ENCODE measurements at regions of chr4 and their contacts with region 1.

Region 1: DNA sequence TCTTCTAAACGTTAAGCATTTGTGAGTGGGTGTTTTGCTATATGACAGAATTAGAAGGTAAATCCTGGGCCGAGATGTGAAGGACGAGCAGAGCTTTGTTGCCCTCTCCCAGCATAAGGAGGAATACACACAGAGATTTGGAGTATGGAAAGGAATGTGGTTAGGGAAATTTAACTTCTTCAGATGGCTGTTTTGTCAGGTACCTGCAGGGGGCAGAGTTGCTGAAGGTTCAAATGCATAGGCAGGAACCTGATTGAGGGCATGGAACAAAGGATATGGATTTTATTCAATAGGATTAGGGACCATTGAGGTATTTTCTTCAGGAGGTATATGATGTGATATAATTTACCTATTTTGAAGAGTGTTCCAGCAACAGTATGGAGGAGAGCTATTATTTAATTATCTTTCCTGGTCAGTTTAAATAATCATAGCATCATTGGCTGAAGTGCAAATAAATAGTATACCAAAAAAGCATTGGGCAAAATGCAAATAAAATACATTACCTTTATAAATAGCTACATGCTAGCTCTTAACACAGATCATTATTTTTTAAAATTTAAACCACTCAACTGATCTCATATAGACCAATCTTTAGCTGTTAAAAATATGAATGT is 143.6 kb downstream of the SLIT2 start:
- DNase-seq: peak; percentile 43 to 82
- H3K4me3 ChIP-seq: no peak overlapping the region
- H3K27ac ChIP-seq: no peak overlapping the region
- H3K4me1 ChIP-seq: no peaks in the 10 kb centered on the region; a peak in 1 of 7 replicates
- H3K27me3 ChIP-seq: no peaks in the 10 kb centered on the region
- CTCF ChIP-seq: peak in 2 of 3 experiments; percentile 65 to 83; a peak in 3 of 4 replicates
- EP300 ChIP-seq: no peak
- POLR2A ChIP-seq: no peak
- RAD21 ChIP-seq: peak; percentile 52 to 55

Region 2: DNA sequence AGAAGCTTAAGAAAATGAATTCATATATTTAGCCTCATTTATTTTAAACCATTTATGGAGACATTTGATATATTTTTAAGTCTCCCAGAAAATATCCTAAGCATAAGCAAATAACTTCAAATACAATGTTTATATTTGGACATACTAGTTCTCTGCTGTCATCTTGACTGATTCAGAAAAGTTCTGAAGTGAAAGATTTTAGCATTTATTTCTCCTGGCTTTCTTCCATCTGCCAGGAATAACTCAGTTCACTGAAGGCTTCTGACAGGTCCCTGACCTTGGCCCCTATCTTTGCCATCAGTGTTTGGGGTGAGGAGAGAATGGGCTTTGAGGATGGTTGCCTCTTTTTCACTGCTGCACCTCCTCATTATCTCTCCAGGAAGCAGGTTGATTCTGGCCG is 27.8 kb before region 1 on chr4:
- CTCF ChIA-PET with region 1: interaction called, 14 read pairs
- POLR2A ChIA-PET with region 1: no interaction called
- DNase-seq: no peak
- H3K4me3 ChIP-seq: no peak overlapping the region
- H3K27ac ChIP-seq: no peak overlapping the region
- H3K4me1 ChIP-seq: no peaks in the 10 kb centered on the region
- H3K27me3 ChIP-seq: no peaks in the 10 kb centered on the region
- CTCF ChIP-seq: no peak
- EP300 ChIP-seq: no peak
- POLR2A ChIP-seq: no peak
- RAD21 ChIP-seq: no peak

Region 3: GRCh38 chr4:20378181-20378580 is 17.1 kb before region 1 on chr4:
- CTCF ChIA-PET with region 1: interaction called, 39 read pairs
- POLR2A ChIA-PET with region 1: interaction called, 3 read pairs
- DNase-seq: no peak
- H3K4me3 ChIP-seq: no peak overlapping the region
- H3K27ac ChIP-seq: no peak overlapping the region
- H3K4me1 ChIP-seq: peaks cover 0 to 3% (median 1%) of the 10 kb centered on the region in 4 experiments; a peak in 2 of 7 replicates
- H3K27me3 ChIP-seq: no peaks in the 10 kb centered on the region
- CTCF ChIP-seq: no peak
- EP300 ChIP-seq: no peak
- POLR2A ChIP-seq: no peak
- RAD21 ChIP-seq: no peak

Region 4: GRCh38 chr4:20408611-20409010 is 13.3 kb after region 1 on chr4:
- CTCF ChIA-PET with region 1: interaction called, 22 read pairs
- POLR2A ChIA-PET with region 1: no interaction called
- DNase-seq: no peak
- H3K4me3 ChIP-seq: no peak overlapping the region
- H3K27ac ChIP-seq: no peak overlapping the region
- H3K4me1 ChIP-seq: no peaks in the 10 kb centered on the region
- H3K27me3 ChIP-seq: no peaks in the 10 kb centered on the region
- CTCF ChIP-seq: no peak
- EP300 ChIP-seq: no peak
- POLR2A ChIP-seq: no peak
- RAD21 ChIP-seq: no peak

Region 5: GRCh38 chr4:20428436-20429160 is 33.3 kb after region 1 on chr4:
- CTCF ChIA-PET with region 1: interaction called, 12 read pairs
- POLR2A ChIA-PET with region 1: no interaction called
- DNase-seq: no peak
- H3K4me3 ChIP-seq: no peak overlapping the region
- H3K27ac ChIP-seq: no peak overlapping the region
- H3K4me1 ChIP-seq: peaks cover 0 to 7% (median 2%) of the 10 kb centered on the region in 4 experiments; a peak in 2 of 7 replicates
- H3K27me3 ChIP-seq: no peaks in the 10 kb centered on the region
- CTCF ChIP-seq: peak in 2 of 3 experiments; percentile 15 to 30; a peak in 2 of 4 replicates
- EP300 ChIP-seq: no peak
- POLR2A ChIP-seq: no peak
- RAD21 ChIP-seq: peak; percentile 61 to 63

Measured in H1 (cell line).